GM12878 (cell line): ENCODE measurements at regions of chr1 and their contacts with region 1.

Region 1: DNA sequence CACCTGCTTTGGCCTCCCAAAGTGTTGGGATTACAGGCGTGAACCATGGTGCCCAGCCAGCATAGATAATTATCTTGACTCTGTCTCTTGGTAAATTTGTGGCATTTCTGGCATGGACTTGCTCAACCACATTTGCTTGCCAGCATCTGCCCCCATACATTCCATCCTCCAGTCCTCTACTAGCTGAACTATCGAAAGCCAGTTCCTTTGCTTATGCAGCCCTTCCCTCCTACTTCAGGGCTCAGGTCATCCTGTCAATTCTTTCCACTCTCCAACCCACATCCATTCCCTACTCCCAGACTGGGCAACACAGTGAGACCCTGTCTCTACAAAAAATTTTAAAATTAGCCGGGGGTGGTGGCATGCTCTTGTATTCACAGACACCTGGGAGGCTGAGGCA is 13.0 kb upstream of the UQCRHL start:
- DNase-seq: no peak
- ATAC-seq: no peak
- H3K4me3 ChIP-seq: no peak overlapping the region
- H3K27ac ChIP-seq: no peak overlapping the region
- H3K4me1 ChIP-seq: no peaks in the 10 kb centered on the region
- H3K27me3 ChIP-seq: no peaks in the 10 kb centered on the region
- CTCF ChIP-seq: no peak
- EP300 ChIP-seq: no peak
- POLR2A ChIP-seq: no peak
- RAD21 ChIP-seq: no peak

Region 2: GRCh38 chr1:15584489-15585363 is 235.8 kb before region 1 on chr1 and contains the start of gene AGMAT:
- CTCF ChIA-PET with region 1: no interaction called
- POLR2A ChIA-PET with region 1: no interaction called
- RAD21 ChIA-PET with region 1: no interaction called
- SMC1A ChIA-PET with region 1: no interaction called
- in situ Hi-C with region 1: no loop called
- intact Hi-C with region 1: no loop called
- DNase-seq: no peak
- ATAC-seq: peak; percentile 87
- H3K4me3 ChIP-seq: peak within 1 kb of the TSS; percentile 68
- H3K27ac ChIP-seq: no peak within 1 kb of the TSS
- H3K4me1 ChIP-seq: peaks cover 7% of the 10 kb centered on the region
- H3K27me3 ChIP-seq: no peaks in the 10 kb centered on the region
- CTCF ChIP-seq: peak; percentile 18 to 42 (median 39); a peak in 4 of 6 replicates
- EP300 ChIP-seq: no peak
- POLR2A ChIP-seq: peak; percentile 71
- RAD21 ChIP-seq: no peak
- polyA plus RNA-seq, gene AGMAT: 0.47 to 1.6 TPM

Region 3: GRCh38 chr1:15803354-15803753 is 17.1 kb before region 1 on chr1:
- CTCF ChIA-PET with region 1: interaction called, 17 read pairs
- POLR2A ChIA-PET with region 1: no interaction called
- RAD21 ChIA-PET with region 1: interaction called, 10 read pairs
- SMC1A ChIA-PET with region 1: interaction called, 10 read pairs
- in situ Hi-C with region 1: no loop called
- intact Hi-C with region 1: no loop called
- DNase-seq: no peak
- ATAC-seq: peak; percentile 76
- H3K4me3 ChIP-seq: no peak overlapping the region
- H3K27ac ChIP-seq: no peak overlapping the region
- H3K4me1 ChIP-seq: no peaks in the 10 kb centered on the region
- H3K27me3 ChIP-seq: no peaks in the 10 kb centered on the region
- CTCF ChIP-seq: peak; percentile 39 to 53 (median 47)
- EP300 ChIP-seq: no peak
- POLR2A ChIP-seq: no peak
- RAD21 ChIP-seq: peak; percentile 63

Region 4: DNA sequence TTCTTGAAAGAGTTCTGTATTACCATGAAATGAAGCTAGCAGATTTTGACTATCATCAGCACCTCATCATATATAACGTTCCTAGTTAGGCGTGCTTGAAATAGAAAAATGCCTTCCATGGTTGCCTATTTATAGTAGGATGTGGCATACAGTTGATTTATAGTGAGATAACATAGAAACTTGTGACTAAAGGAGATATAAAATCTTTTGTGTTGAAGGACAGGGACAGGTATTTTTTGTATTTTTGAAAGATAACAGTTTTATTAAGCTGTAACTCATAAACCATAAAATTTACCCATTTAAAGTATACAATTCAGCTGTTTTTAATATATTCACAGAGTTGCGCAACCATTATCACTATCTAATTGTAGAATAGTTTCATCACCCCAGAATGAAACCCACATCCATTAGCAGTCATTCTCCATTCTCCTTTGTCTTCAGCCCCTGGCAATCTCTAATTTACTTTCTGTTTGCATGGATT is 46.3 kb after region 1 on chr1:
- CTCF ChIA-PET with region 1: interaction called, 13 read pairs
- POLR2A ChIA-PET with region 1: no interaction called
- RAD21 ChIA-PET with region 1: interaction called, 3 read pairs
- SMC1A ChIA-PET with region 1: interaction called, 5 read pairs
- in situ Hi-C with region 1: no loop called
- intact Hi-C with region 1: no loop called
- DNase-seq: no peak
- ATAC-seq: no peak
- H3K4me3 ChIP-seq: no peak overlapping the region
- H3K27ac ChIP-seq: no peak overlapping the region
- H3K4me1 ChIP-seq: no peaks in the 10 kb centered on the region
- H3K27me3 ChIP-seq: no peaks in the 10 kb centered on the region
- CTCF ChIP-seq: no peak
- EP300 ChIP-seq: no peak
- POLR2A ChIP-seq: no peak
- RAD21 ChIP-seq: no peak

Region 5: GRCh38 chr1:15918962-15919715 is 98.7 kb after region 1 on chr1:
- CTCF ChIA-PET with region 1: interaction called, 22 read pairs
- POLR2A ChIA-PET with region 1: interaction called, 3 read pairs
- RAD21 ChIA-PET with region 1: interaction called, 11 read pairs
- SMC1A ChIA-PET with region 1: interaction called, 11 read pairs
- in situ Hi-C with region 1: no loop called
- intact Hi-C with region 1: loop called (anchors 10 kb)
- DNase-seq: peak; percentile 70
- ATAC-seq: peak; percentile 93
- H3K4me3 ChIP-seq: no peak overlapping the region
- H3K27ac ChIP-seq: no peak overlapping the region
- H3K4me1 ChIP-seq: peaks cover 33% of the 10 kb centered on the region
- H3K27me3 ChIP-seq: no peaks in the 10 kb centered on the region
- CTCF ChIP-seq: no peak
- EP300 ChIP-seq: peak in 1 of 2 experiments; percentile 75; a peak in 1 of 4 replicates
- POLR2A ChIP-seq: no peak
- RAD21 ChIP-seq: no peak

Region 6: GRCh38 chr1:15957228-15958095 is 137.0 kb after region 1 on chr1:
- CTCF ChIA-PET with region 1: interaction called, 43 read pairs
- POLR2A ChIA-PET with region 1: interaction called, 3 read pairs
- RAD21 ChIA-PET with region 1: interaction called, 8 read pairs
- SMC1A ChIA-PET with region 1: interaction called, 3 read pairs
- in situ Hi-C with region 1: no loop called
- intact Hi-C with region 1: no loop called
- DNase-seq: no peak
- ATAC-seq: peak; percentile 86
- H3K4me3 ChIP-seq: no peak overlapping the region
- H3K27ac ChIP-seq: no peak overlapping the region
- H3K4me1 ChIP-seq: peaks cover 3% of the 10 kb centered on the region
- H3K27me3 ChIP-seq: no peaks in the 10 kb centered on the region
- CTCF ChIP-seq: peak; percentile 22 to 61 (median 25); a peak in 5 of 6 replicates
- EP300 ChIP-seq: no peak
- POLR2A ChIP-seq: no peak
- RAD21 ChIP-seq: no peak

Region 7: GRCh38 chr1:16009030-16009709 is 188.7 kb after region 1 on chr1:
- CTCF ChIA-PET with region 1: interaction called, 54 read pairs
- POLR2A ChIA-PET with region 1: interaction called, 3 read pairs
- RAD21 ChIA-PET with region 1: interaction called, 23 read pairs
- SMC1A ChIA-PET with region 1: interaction called, 57 read pairs
- in situ Hi-C with region 1: no loop called
- intact Hi-C with region 1: loop called (anchors 2 kb)
- DNase-seq: no peak
- ATAC-seq: peak; percentile 55
- H3K4me3 ChIP-seq: no peak overlapping the region
- H3K27ac ChIP-seq: no peak overlapping the region
- H3K4me1 ChIP-seq: peaks cover 35% of the 10 kb centered on the region
- H3K27me3 ChIP-seq: no peaks in the 10 kb centered on the region; a peak in 1 of 4 replicates
- CTCF ChIP-seq: peak; percentile 93 to 97 (median 93)
- EP300 ChIP-seq: no peak
- POLR2A ChIP-seq: no peak
- RAD21 ChIP-seq: peak; percentile 94